HEK293 (cell line): ENCODE measurements at regions of chr1 and their contacts with region 1.

Region 1: DNA sequence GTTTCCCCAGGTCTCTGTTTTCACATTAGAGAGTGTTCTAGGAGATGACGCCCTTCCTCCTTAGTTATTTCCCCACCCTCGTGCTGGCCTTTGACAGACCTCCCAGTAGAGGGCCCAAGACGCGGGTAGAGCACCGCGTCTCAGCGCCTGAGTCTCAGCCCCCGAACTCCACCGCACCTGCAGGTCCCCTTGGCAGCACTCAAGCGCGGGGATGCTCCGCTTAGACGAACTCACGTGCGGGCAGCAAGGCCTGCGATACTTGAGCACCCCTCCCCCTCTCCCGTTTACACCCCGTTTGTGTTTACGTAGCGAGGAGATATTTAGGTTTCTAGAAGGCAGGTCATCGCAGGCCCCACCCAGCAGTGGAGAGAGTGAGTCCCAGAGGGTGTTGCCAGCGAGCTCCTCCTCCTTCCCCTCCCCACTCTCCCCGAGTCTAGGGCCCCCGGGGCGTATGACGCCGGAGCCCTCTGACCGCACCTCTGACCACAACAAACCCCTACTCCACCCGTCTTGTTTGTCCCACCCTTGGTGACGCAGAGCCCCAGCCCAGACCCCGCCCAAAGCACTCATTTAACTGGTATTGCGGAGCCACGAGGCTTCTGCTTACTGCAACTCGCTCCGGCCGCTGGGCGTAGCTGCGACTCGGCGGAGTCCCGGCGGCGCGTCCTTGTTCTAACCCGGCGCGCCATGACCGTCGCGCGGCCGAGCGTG is at the start of gene CD55:
- H3K4me3 ChIP-seq: peak within 1 kb of the TSS; percentile 91
- H3K27ac ChIP-seq: peak within 1 kb of the TSS; percentile 74
- H3K4me1 ChIP-seq: no peaks in the 10 kb centered on the region
- CTCF ChIP-seq: peak; percentile 31; the same call in 1 of the 2 replicates

Region 2: DNA sequence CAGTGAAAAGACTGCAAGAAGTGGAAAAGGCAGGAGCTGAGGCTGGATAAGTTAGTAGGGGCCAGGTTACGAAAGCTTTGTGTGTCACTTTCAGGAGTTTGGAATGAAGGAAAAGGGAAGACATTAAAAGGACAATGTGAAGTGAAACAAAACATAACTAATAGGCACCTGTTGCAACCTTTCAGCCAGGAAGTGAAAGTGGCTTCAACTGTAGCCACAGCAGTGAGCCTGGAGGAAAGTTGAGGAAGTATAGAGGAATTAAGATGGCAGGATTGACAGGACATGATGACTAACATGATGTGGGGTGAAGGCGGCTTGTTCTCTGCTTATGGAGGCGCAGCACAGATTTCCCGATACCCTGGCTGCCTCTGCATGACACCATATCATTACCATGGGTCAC is 148.3 kb before region 1 on chr1:
- CTCF ChIA-PET with region 1: no interaction called
- POLR2A ChIA-PET with region 1: no interaction called
- H3K4me3 ChIP-seq: no peak overlapping the region
- H3K27ac ChIP-seq: no peak overlapping the region
- H3K4me1 ChIP-seq: no peaks in the 10 kb centered on the region
- CTCF ChIP-seq: no peak

Region 3: GRCh38 chr1:207309775-207310273 is 11.4 kb before region 1 on chr1:
- CTCF ChIA-PET with region 1: no interaction called
- POLR2A ChIA-PET with region 1: interaction called, 14 read pairs
- H3K4me3 ChIP-seq: no peak overlapping the region; the same call in 1 of the 2 replicates
- H3K27ac ChIP-seq: no peak overlapping the region
- H3K4me1 ChIP-seq: no peaks in the 10 kb centered on the region
- CTCF ChIP-seq: no peak

Region 4: GRCh38 chr1:207342346-207342745 is 21.1 kb after region 1 on chr1:
- CTCF ChIA-PET with region 1: no interaction called
- POLR2A ChIA-PET with region 1: no interaction called
- H3K4me3 ChIP-seq: no peak overlapping the region
- H3K27ac ChIP-seq: no peak overlapping the region
- H3K4me1 ChIP-seq: no peaks in the 10 kb centered on the region
- CTCF ChIP-seq: no peak

Region 5: DNA sequence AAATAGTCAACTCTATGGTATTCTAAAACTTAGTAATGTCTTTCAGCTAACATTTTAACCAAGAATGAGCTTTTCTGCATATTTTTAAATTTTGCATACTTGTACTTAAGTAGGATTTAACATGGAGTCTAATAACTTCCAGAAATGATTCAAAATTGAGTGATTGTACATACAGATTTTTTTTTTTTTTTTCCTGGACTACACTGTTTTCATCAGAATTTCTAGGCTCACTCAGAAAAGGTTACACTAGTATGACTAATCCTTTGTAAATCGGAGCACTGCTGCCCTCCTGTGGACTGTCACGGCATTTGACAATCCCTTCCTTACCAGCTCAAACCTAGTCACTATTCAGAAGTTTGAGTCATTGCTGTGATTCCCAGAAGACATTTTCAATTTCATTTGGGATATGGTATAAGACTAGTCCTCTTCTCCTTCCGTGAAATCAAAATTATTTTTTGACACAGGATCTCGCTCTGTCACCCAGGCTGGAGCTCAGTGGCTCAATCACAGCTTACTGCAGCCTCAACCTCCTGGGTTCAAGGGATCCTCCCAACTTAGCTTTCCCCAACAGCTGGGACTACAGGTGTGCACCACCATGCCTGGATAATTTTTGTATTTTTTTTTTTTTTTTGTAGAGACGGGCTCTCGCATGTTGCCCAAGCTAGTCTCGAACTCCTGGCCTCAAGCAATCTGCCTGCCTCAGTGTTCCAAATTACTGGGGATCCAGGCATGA is 476.2 kb after region 1 on chr1:
- CTCF ChIA-PET with region 1: no interaction called
- POLR2A ChIA-PET with region 1: no interaction called
- H3K4me3 ChIP-seq: no peak overlapping the region
- H3K27ac ChIP-seq: no peak overlapping the region
- H3K4me1 ChIP-seq: no peaks in the 10 kb centered on the region; the same call in 1 of the 2 replicates
- CTCF ChIP-seq: peak; percentile 66

Region 6: DNA sequence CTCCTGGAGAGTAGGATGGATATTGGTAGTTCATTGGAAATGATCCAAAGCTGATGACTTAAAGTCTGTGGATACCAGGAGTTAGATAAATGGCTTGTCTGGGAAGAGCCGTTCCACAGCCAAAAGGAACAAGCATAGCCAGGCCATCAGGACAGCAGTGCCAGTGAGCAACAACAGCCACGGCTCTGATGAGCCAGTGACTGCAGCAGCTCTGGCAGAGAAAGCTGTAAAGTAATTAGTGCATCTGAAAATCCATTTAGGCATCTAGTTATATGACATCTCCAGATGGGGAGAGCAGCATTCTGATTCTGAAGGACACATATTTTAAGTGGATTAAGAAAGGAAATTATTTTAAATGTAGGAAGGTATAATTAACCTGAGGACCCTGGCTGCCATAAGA is 1179.1 kb after region 1 on chr1:
- CTCF ChIA-PET with region 1: no interaction called
- POLR2A ChIA-PET with region 1: no interaction called
- H3K4me3 ChIP-seq: no peak overlapping the region
- H3K27ac ChIP-seq: no peak overlapping the region
- H3K4me1 ChIP-seq: no peaks in the 10 kb centered on the region
- CTCF ChIP-seq: no peak